Left cardiac atrium (tissue), 4 donors: ENCODE measurements at regions of chr12 and their contacts with region 1.

Region 1: DNA sequence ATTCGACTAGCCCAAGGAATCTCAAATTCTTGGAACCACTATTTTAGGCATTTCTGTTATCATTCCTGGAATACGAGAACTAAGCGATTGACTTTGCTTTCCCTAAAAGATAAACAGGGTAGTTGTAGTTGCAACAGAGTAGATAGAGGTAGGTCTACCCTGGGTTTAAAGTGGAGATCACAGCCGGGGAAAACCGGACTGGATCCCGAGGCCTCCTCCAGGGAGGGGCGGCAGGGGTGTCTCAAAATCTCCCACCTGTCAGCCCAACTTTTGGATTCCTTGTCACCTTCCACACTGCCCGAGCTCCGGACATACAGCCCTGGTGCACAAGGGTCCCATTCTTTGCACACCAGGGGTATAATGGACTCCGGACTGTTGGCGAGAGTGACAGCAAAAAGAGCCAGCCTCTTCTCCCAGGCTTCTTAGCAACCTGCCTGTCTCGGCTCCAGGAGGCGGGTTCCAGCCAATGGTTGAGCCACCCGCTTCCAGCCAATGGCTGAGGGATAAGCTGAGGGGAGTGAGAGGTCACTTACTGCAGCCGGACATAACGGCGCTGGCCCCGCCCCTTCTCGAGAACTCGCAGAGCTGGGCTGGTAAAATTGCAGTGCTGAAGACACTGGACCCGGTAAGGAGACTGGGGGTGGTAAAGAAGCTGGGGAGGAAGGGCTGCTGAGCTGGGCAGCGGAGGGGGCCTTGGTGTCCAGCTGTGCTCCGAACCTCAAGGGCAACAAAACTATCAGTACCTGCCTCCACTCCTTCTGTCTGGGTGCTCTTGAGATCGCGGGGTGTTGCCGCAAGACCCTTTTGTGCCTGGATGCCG is at the start of gene SUOX:
- DNase-seq: peak; percentile 98
- ATAC-seq: peak; percentile 100
- total RNA-seq, gene SUOX: 20.3 to 29.8 TPM

Region 2: GRCh38 chr12:55875704-55876467 is 121.0 kb before region 1 on chr12:
- intact Hi-C with region 1: no loop called
- DNase-seq: no peak
- ATAC-seq: no peak

Region 3: DNA sequence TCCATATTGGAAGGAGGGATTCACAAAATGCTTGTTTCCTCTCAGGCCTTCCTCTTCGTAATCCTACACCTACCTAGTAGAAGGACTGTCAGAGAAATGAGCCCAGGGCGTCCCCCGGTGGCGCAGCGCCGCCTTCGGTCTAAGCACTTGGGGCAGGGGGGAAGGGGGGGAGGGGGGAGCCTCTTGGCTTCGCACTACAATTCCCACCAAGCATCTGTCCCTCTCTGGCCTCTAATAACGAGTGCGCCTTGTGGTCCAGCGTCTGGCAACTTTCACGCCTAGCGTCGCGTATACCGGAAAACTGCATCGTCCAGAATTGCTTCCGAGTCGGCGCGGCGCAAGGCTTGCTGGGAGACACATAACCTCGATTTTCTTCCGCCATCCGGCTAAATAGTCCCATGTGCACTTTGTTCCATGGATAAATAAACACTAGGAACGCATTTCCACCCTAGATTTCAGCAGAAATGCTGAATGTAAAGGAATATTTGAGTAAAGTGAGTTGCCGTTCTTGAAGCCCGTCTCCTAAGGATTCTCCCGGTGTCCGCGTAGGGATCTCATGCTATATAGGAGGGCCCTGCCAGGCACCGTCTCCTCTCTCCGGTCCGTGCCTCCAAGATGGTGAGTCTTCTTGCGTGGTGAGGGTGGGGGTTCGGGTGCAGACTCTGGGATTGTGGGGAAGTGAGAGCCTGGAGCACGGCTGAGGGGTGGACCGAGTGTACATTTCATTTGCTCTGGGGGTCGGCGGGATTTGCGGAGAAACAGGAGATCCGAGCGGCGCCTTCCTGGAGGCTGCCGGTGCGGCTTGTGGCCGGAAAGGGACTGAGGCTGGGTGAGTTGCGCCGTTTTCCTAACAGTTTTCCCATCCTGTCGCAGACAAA is 44.9 kb after region 1 on chr12 and contains the start of gene RPS26:
- intact Hi-C with region 1: loop called in 1 of 2 experiments (anchors 2 kb)
- DNase-seq: peak; percentile 98
- ATAC-seq: peak; percentile 97 to 98
- total RNA-seq, gene RPS26: 28.5 to 47.1 TPM

Region 4: GRCh38 chr12:56098592-56098991 is 101.7 kb after region 1 on chr12:
- intact Hi-C with region 1: loop called (anchors 10 kb)
- DNase-seq: no peak
- ATAC-seq: no peak

Region 5: DNA sequence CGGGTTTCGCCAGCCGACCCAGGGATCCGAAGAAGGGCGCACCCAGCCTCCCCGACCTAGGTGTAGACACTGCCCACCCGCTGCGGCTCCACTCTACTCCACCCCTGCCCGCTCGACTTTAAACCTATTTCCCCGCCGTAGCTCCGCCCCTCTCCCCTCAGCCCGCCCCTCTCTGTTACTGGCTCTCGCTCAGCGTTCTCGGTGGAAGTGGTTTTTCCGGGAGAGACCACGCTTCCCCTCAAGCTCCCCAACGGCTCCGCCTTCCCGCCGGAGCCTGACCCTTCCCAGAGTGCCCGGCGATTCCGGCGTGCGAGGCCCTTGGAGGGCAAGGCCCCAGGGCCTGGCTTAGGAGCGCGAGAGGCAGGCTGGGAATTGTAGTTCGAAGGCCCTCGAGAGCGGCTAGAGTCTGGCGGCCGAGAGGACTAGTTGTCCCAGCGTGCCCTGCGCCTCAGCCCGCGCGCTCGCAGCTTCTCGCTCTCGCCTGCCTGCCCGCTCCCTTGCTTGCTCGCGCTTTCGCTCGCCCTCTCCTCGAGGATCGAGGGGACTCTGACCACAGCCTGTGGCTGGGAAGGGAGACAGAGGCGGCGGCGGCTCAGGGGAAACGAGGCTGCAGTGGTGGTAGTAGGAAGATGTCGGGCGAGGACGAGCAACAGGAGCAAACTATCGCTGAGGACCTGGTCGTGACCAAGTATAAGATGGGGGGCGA is 107.3 kb after region 1 on chr12 and contains the start of gene PA2G4:
- intact Hi-C with region 1: loop called (anchors 10 kb)
- DNase-seq: peak; percentile 99
- ATAC-seq: peak; percentile 98 to 99
- total RNA-seq, gene PA2G4: 60.4 to 83.9 TPM

Region 6: DNA sequence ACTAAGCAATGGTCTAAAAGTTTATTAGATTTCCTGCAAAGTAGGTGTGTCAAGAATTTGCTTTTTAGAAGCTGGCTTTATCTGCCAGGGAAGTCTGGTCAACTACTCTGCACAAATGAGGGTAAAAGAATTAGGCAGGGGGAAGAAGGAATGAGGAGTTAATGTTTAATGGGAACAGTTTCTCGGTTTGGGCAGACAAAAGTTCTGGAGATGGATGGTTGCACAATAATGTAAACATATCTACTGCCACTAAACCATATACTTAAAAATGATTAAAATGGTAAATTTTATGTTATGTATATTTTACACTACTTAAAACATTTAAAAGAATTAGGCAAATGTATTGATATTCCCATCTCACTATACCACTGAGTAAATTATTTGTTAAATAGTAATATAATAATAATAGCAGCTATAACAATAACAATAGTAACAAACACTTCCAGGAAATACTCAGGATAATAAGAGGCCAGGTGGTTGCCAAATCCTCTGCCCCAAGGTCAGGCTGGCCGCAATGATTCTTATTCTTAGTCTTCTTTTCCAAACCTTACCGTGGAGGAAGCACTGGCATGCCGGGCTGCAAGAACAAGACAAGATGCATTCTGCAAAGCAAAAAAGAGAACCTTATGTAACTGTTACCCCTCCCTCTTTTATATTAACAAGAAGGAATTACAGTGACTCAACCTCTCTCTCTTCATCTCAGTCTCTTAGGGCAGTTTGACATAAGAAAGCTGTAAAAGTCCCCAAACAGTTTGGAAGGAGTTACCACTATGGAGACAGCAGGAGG is 289.3 kb after region 1 on chr12:
- intact Hi-C with region 1: no loop called
- DNase-seq: no peak
- ATAC-seq: no peak

Region 7: DNA sequence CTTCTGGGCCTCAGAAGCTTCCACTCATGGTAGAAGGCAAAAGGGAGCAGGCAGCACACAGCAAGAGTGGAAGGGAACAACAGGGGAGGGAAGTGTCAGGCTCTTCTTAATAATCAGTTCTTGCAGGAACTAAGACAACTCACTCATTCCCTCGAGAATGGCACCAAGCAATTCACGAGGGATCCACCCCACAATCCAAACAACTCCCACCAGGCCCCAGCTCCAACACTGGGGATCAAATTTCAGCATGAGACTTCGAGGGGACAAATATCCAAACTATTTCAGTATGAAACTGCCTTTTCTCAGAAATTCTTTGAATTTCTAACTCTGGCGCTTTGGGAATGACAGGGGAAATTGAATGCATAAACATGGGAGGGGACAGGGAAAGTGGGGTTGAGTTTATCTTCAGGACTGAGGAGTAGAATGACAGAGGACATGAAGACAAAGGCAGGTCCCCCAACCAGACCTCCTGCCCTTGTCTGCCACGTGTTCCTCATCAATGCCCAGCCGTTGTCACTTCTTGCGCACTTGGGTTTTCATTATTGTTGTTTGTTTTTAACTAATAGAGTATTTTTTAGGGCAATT is 390.3 kb after region 1 on chr12:
- intact Hi-C with region 1: no loop called
- DNase-seq: no peak
- ATAC-seq: no peak